Posterior vena cava (tissue), 2 donors: ENCODE measurements at regions of chr5 and their contacts with region 1.

Region 1: DNA sequence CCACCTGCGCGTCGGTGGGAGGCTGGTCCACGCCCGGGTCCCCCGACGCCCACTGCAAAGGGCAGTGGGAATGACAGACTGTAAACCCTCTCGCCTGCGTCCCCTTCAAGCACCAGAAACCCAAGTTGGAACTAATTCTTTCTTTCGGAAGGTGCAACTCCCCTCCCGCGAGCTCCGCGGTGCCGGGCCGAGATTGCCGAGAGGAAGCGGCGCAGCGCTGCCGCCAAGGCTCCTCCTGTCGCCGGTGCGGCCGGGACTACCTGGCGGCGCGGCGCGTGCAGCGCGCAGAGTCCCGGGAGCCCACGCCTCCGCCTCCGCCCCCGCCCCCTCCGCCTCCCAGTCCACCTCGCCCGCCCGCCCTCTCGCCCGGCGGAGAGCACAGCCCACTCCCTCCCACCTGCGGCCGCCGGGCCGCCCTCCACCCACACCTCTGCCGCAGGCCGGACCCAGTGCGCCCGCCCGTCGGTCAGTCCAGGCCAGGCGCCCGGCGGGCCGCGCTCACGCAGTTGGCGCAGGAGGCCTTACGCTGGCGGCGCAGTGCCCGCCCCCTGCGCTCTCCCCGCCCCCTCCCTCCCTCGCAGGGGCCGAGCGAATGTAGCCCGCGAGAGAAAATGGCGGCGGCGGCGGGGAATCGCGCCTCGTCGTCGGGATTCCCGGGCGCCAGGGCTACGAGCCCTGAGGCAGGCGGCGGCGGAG is at the start of gene MAP3K1:
- DNase-seq: peak; percentile 93
- total RNA-seq, gene MAP3K1: 10.4 to 12.0 TPM

Region 2: GRCh38 chr5:56481428-56482357 is 333.4 kb before region 1 on chr5:
- intact Hi-C with region 1: loop called in 1 of 2 experiments (anchors 10 kb)
- DNase-seq: peak; percentile 72